Natural killer cell (primary cell): ENCODE measurements at regions of chr6 and their contacts with region 1.

Region 1: DNA sequence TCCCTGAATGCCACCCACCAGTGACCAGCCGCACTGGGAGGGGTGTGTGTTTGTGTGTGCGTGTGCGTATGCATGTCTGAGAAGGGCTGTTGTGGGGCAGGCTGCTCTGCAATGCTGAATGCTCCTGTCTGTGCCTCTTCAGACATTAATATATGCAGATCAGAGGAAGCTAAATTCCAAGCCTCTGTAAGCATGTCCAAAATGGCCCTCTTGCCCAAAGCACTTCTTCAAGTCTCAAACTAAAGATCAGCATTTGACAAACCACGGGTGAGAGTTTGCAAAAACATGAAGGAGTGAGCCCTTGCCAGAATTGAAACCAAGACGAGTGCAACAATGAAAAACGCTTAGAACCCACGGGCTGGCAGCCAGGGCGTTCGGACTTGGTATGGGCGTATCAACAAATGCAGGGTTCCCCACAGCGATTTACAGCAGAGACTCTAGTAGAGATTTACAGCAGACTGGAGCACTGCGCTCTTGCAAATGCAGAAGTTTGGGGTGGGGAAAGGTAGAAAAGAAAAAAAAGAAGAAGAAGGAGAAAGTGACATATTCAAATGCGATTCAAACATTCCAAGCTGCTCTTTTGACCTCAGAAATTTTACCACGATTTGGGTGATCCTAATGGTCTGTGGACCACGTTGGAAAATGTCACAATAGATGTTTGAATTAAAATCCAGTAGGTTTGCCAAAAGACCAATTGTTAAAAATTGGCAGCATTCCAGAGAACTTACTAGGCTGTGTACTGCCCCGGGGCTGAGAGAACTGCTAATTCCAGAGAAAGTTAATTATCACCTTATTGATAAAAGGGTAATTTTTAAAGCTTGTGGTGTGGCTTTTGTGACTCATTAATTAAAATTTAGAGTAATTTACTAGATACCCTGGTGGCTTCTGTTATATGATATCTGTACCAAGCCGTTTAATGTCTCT is 3.5 kb downstream of the SCML4 start:
- DNase-seq: peak in 1 of 2 donors; percentile 70
- ATAC-seq: peak in 1 of 3 donors; percentile 10
- H3K4me3 ChIP-seq: peak overlapping the region; percentile 16
- H3K4me3 Mint-ChIP-seq: peak overlapping the region; percentile 98
- H3K27ac ChIP-seq: peak overlapping the region; percentile 96
- H3K27ac Mint-ChIP-seq: peak overlapping the region; percentile 89 to 100
- H3K4me1 ChIP-seq: peaks cover 50% of the 10 kb centered on the region
- H3K4me1 Mint-ChIP-seq: peaks cover 76 to 82% of the 10 kb centered on the region in 2 donors
- H3K27me3 ChIP-seq: no peaks in the 10 kb centered on the region
- H3K27me3 Mint-ChIP-seq: no peaks in the 10 kb centered on the region
- CTCF ChIP-seq: no peak

Region 2: GRCh38 chr6:107459283-107460082 is 361.1 kb before region 1 on chr6 and contains the start of gene PDSS2:
- intact Hi-C with region 1: loop called (anchors 1 kb)
- DNase-seq: peak; percentile 96
- ATAC-seq: peak; percentile 96 to 100 (median 97)
- H3K4me3 ChIP-seq: peak within 1 kb of the TSS; percentile 90
- H3K4me3 Mint-ChIP-seq: peak within 1 kb of the TSS; percentile 91
- H3K27ac ChIP-seq: peak within 1 kb of the TSS; percentile 94
- H3K27ac Mint-ChIP-seq: peak within 1 kb of the TSS; percentile 91 to 97
- H3K4me1 ChIP-seq: peaks cover 17% of the 10 kb centered on the region
- H3K4me1 Mint-ChIP-seq: peaks cover 19 to 21% of the 10 kb centered on the region in 2 donors
- H3K27me3 ChIP-seq: no peaks in the 10 kb centered on the region
- H3K27me3 Mint-ChIP-seq: no peaks in the 10 kb centered on the region
- CTCF ChIP-seq: peak; percentile 26
- total RNA-seq, gene PDSS2: 11.2 to 15.5 (median 14.2) TPM

Region 3: DNA sequence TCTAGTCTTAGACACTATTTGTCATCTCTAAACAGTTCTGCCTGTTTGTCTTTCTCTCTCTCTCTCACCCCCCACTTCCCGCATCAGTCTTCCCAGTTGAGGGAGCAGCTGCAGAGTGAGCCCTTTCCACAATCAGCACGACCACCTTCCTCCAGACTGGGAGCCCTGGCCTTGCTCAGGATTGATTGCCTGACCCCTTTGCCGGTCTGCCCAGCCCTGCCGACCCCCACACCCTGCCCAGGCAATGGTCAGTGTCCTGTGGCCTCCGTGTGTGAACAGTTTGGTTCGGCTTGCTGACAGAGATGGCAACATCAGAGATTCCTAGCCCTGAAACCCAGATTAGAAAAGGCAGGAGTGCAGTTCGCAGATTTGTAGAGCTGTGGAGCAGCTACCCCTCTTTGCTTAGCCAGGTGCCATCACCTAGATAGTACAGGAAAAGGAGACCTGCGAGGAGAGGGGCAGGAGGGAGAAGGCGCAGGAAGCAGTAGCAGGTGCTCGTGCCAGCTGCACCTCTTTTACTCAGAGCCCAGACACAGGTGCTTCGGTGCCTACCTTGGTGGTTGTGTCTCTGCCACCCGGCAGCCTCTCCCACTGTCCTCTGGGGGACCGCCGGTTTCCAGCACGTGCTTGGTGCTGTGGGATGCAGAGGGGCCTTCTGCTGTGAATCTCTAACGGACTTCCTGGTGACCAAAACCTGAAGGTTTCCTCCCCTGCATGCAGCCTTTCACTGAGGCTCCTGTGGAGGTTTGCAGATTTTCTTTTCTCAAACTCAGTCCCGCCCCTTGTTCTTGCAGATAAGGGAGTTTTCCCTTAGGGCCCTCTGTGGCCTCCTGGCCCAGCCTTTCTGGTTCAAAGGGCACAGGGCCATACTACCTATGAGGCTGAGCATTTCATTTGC is 88.9 kb before region 1 on chr6:
- intact Hi-C with region 1: loop called (anchors 1 kb)
- DNase-seq: peak in 1 of 2 donors; percentile 59
- ATAC-seq: peak in 1 of 3 donors; percentile 46
- H3K4me3 ChIP-seq: peak overlapping the region; percentile 43
- H3K4me3 Mint-ChIP-seq: peak overlapping the region; percentile 45
- H3K27ac ChIP-seq: peak overlapping the region; percentile 49
- H3K27ac Mint-ChIP-seq: peak overlapping the region in 1 of 2 donors; percentile 54
- H3K4me1 ChIP-seq: peaks cover 66% of the 10 kb centered on the region
- H3K4me1 Mint-ChIP-seq: peaks cover 37 to 55% of the 10 kb centered on the region in 2 donors
- H3K27me3 ChIP-seq: no peaks in the 10 kb centered on the region
- H3K27me3 Mint-ChIP-seq: no peaks in the 10 kb centered on the region
- CTCF ChIP-seq: no peak

Region 4: GRCh38 chr6:107843400-107843799 is 22.8 kb after region 1 on chr6:
- intact Hi-C with region 1: no loop called
- DNase-seq: no peak
- ATAC-seq: no peak
- H3K4me3 ChIP-seq: no peak overlapping the region
- H3K4me3 Mint-ChIP-seq: no peak overlapping the region
- H3K27ac ChIP-seq: no peak overlapping the region
- H3K27ac Mint-ChIP-seq: no peak overlapping the region
- H3K4me1 ChIP-seq: peaks cover 8% of the 10 kb centered on the region
- H3K4me1 Mint-ChIP-seq: peaks cover 0 to 8% of the 10 kb centered on the region in 2 donors
- H3K27me3 ChIP-seq: no peaks in the 10 kb centered on the region
- H3K27me3 Mint-ChIP-seq: no peaks in the 10 kb centered on the region
- CTCF ChIP-seq: no peak

Region 5: GRCh38 chr6:107957909-107958688 is 137.5 kb after region 1 on chr6 and contains the start of gene SEC63:
- intact Hi-C with region 1: loop called (anchors 5 kb)
- DNase-seq: peak; percentile 96 to 98
- ATAC-seq: peak; percentile 96 to 100 (median 98)
- H3K4me3 ChIP-seq: peak within 1 kb of the TSS; percentile 68
- H3K4me3 Mint-ChIP-seq: peak within 1 kb of the TSS; percentile 99
- H3K27ac ChIP-seq: peak within 1 kb of the TSS; percentile 72
- H3K27ac Mint-ChIP-seq: peak within 1 kb of the TSS; percentile 92 to 93
- H3K4me1 ChIP-seq: peaks cover 18% of the 10 kb centered on the region
- H3K4me1 Mint-ChIP-seq: peaks cover 18 to 29% of the 10 kb centered on the region in 2 donors
- H3K27me3 ChIP-seq: no peaks in the 10 kb centered on the region
- H3K27me3 Mint-ChIP-seq: no peaks in the 10 kb centered on the region
- CTCF ChIP-seq: no peak
- total RNA-seq, gene SEC63: 84.4 to 104 (median 90.4) TPM

Region 6: DNA sequence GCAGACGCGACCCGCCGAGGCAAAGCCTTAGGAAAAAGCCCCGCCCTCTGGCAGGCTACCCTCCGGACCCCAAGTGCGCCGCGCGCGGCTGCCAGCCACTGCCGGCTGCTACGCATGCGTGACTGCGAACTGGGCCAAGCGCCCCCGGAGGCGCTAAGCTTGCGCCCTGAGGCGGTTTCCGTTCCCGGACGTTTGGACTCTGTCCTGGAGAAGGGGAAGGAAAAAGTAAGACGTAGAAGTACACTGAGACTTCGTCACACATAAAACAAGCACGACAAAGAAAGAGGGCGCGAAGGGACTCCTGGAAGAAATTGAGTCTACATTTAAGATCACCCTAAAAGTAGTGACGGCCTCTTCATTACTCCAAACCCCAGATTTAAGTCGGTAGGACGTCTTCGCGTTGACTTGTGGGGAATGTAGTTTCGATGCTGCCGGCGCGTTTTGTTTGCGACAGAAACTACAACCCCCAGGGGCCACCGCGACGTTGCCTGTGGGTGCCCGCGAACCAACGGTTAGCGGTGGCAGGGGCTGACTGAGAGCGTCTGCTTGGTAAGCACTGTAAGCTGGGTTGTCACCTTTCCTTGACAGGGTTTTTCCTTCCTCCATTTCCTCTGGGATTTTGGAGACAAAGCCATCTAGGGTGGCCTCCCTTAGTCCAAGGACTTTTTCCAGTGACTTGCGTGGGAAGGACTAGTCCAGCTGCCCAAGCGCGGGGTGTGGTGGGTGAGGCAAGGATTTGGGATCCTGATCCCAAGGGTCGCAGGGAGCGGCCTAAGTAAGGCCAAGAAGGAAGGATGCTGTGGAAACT is 1274.6 kb after region 1 on chr6 and contains the start of gene CEP57L1:
- intact Hi-C with region 1: loop called (anchors 10 kb)
- DNase-seq: peak; percentile 94 to 97
- ATAC-seq: peak; percentile 71 to 87 (median 74)
- H3K4me3 ChIP-seq: peak within 1 kb of the TSS; percentile 64
- H3K4me3 Mint-ChIP-seq: peak within 1 kb of the TSS; percentile 94
- H3K27ac ChIP-seq: peak within 1 kb of the TSS; percentile 98
- H3K27ac Mint-ChIP-seq: peak within 1 kb of the TSS; percentile 98 to 99
- H3K4me1 ChIP-seq: peaks cover 8% of the 10 kb centered on the region
- H3K4me1 Mint-ChIP-seq: peaks cover 42 to 52% of the 10 kb centered on the region in 2 donors
- H3K27me3 ChIP-seq: no peaks in the 10 kb centered on the region
- H3K27me3 Mint-ChIP-seq: no peaks in the 10 kb centered on the region
- CTCF ChIP-seq: no peak
- total RNA-seq, gene CEP57L1: 8.9 to 12.5 (median 9.2) TPM